ENCODE measurements at regions of chr21 and their contacts with region 1.

Region 1: GRCh38 chr21:45140346-45140940 is 66.1 kb downstream of the ADARB1 start:
- DNase-seq: no peak
- H3K4me3 ChIP-seq: no peak overlapping the region
- H3K27ac ChIP-seq: no peak overlapping the region
- H3K4me1 ChIP-seq: peaks cover 0 to 17% (median 0%) of the 10 kb centered on the region in 3 donors
- H3K27me3 ChIP-seq: no peaks in the 10 kb centered on the region
- CTCF ChIP-seq: peak; percentile 55 to 94 (median 80)
- POLR2A ChIP-seq: no peak

Region 2: DNA sequence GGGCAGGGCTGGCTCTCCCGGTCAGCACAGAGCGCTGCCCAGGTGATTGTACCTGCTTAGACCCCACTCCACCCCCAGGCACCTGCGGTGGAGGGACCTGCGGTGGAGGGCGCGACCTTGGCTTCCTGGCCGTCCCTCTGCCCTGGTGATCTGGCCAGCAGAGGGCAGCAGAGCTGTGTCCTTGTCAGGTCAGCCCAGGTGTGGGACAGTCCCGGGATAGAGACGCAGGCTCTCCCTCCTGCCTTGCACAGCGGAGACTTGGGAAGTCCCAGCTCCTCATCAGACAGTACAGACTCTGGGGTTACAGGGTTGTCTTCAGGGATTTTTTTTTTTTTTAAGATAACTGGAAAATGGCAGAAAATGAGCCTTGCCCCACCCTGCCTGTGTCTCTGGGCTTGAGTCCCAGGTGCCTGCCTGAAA is 190.7 kb before region 1 on chr21:
- intact Hi-C with region 1: loop called (anchors 5 kb)
- DNase-seq: no peak
- H3K4me3 ChIP-seq: no peak overlapping the region
- H3K27ac ChIP-seq: no peak overlapping the region
- H3K4me1 ChIP-seq: peaks cover 2 to 23% (median 6%) of the 10 kb centered on the region in 3 donors
- H3K27me3 ChIP-seq: no peaks in the 10 kb centered on the region
- CTCF ChIP-seq: peak; percentile 87 to 97 (median 91)
- POLR2A ChIP-seq: no peak

Region 3: GRCh38 chr21:45000977-45001728 is 139.3 kb before region 1 on chr21:
- intact Hi-C with region 1: no loop called
- DNase-seq: no peak
- H3K4me3 ChIP-seq: peak overlapping the region in 1 of 4 donors; percentile 47
- H3K27ac ChIP-seq: peak overlapping the region in 2 of 4 donors; percentile 4 to 15
- H3K4me1 ChIP-seq: peaks cover 14 to 22% (median 17%) of the 10 kb centered on the region in 3 donors
- H3K27me3 ChIP-seq: peaks cover 0 to 6% (median 0%) of the 10 kb centered on the region in 4 donors
- CTCF ChIP-seq: no peak
- POLR2A ChIP-seq: no peak

Region 4: DNA sequence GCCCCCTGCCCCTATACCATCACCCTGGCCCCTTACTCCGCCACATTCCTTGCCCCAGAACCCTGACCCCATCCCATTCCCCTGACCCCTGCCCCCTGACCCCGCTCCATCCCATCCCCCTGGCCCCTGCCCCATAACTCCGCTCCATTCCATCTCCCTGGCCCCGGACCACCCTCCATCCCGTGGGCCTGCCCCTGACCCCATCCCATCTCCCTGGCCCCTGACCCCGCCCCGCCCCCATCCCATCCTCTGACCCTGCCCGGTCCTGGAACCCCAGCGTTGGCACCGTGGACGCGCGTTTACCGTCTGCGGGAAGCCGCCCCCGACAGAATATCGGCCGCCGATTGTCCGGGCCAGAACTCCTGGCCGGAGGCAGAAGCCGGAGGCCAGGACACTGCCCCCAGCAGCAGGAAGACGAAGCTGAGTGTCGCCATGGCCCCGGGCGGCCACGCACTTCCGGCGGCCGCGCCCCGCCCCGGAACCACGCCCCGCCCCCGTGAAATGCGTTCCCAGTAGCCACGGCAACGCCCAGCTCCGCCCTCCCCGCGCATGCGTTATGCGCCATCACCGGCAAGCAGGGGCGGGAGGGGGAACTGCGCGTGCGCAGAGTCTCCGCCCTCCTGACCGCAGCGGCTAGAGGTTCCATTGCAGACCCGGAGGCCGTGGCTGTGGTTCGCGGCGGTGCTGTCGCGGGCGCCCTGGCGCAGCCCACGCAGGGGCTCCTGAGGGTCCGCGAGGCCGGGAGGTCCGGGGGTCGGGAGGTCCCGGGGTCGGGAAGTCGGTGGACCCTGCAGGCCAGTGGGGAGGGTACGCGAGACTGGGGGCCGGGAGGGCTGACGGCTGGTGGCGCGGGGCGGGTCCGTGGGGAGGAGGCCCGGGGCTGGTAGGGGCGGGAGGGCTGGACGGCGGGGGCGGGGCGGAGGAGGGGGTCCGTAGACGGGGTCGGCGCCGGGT is 147.3 kb after region 1 on chr21 and contains the start of gene POFUT2:
- intact Hi-C with region 1: loop called (anchors 10 kb)
- DNase-seq: peak; percentile 65
- H3K4me3 ChIP-seq: peak within 1 kb of the TSS; percentile 55 to 95 (median 82)
- H3K27ac ChIP-seq: peak within 1 kb of the TSS; percentile 80 to 93 (median 88)
- H3K4me1 ChIP-seq: peaks cover 15 to 48% (median 27%) of the 10 kb centered on the region in 3 donors
- H3K27me3 ChIP-seq: no peaks in the 10 kb centered on the region
- CTCF ChIP-seq: peak in 2 of 6 experiments; percentile 20 to 21
- POLR2A ChIP-seq: peak in 3 of 4 donors; percentile 59 to 84 (median 83)
- total RNA-seq, gene POFUT2: 7.9 to 11.4 (median 9.4) TPM

Measured in esophagus squamous epithelium (tissue), 5 donors.